WTC11 (cell line): ENCODE measurements at regions of chr19 and their contacts with region 1.

Region 1: DNA sequence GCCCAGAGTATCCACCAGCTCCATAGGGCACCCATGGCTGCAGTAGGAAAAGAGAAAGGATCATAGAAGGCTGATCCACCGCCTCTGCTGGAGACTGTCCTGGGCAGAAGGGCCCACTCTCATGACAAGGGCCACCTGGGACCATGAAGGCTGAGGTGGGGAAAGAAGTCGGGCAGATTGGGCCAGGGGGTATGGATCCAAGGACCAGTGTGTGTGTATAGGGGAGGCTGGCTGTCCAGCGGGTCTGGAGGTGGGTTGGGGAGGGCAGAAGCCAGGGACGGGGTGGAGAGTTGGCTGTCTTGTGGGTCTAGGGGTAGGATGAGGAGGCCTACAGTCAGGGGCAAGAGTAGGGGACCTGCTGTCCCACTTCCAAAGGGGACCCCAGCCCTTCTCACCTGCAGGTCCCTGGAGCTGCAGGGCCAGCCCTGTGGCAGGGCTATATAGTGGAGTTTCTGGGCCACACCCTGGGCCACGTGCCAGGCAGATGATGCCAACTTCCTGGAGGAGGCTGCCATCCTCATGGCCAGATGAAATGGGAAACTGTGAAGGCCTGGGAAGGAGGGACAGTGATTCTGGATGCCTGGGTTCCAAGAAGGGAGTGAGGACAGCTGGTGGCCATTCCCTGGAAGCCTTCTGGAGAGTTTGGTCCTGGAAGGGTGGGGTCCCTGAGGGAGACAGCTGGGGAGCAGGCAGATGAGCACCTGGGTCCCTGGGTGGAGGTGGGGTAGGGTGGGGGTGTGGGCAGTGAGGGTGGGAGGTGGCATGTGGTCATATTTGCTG is at the start of gene FCGBP:
- DNase-seq: no peak
- ATAC-seq: no peak
- H3K4me3 Mint-ChIP-seq: no peak within 1 kb of the TSS
- H3K27ac Mint-ChIP-seq: no peak within 1 kb of the TSS
- H3K4me1 Mint-ChIP-seq: no peaks in the 10 kb centered on the region
- H3K27me3 Mint-ChIP-seq: peaks cover 3% of the 10 kb centered on the region
- CTCF ChIP-seq: no peak
- total RNA-seq, gene FCGBP: 2.8 to 4.4 TPM (median 3.5 TPM) in 3 replicates

Region 2: DNA sequence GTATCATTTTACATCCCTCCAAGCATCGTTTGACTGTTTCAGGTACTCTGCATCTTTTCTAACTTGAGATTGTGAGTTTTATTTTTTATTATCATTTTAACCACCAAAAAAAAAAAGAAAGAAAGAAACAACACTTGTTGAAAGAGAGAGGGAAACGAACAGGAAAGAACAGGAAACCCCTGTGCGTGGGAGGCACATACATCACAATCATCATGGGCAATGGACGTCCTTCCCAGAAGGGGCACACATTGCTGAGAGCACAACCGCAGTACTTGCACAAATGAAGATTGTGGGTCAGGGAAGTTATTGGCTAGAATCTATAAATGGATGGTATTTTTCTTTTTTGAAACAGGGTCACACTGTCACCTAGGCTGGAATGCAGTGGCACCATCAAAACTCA is 198.7 kb before region 1 on chr19:
- CTCF ChIA-PET with region 1: no interaction called
- POLR2A ChIA-PET with region 1: interaction called, 11 read pairs
- DNase-seq: no peak
- ATAC-seq: no peak
- H3K4me3 Mint-ChIP-seq: no peak overlapping the region
- H3K27ac Mint-ChIP-seq: no peak overlapping the region
- H3K4me1 Mint-ChIP-seq: no peaks in the 10 kb centered on the region; the same call in 1 of the 2 replicates
- H3K27me3 Mint-ChIP-seq: peaks cover 33% of the 10 kb centered on the region
- CTCF ChIP-seq: no peak

Region 3: DNA sequence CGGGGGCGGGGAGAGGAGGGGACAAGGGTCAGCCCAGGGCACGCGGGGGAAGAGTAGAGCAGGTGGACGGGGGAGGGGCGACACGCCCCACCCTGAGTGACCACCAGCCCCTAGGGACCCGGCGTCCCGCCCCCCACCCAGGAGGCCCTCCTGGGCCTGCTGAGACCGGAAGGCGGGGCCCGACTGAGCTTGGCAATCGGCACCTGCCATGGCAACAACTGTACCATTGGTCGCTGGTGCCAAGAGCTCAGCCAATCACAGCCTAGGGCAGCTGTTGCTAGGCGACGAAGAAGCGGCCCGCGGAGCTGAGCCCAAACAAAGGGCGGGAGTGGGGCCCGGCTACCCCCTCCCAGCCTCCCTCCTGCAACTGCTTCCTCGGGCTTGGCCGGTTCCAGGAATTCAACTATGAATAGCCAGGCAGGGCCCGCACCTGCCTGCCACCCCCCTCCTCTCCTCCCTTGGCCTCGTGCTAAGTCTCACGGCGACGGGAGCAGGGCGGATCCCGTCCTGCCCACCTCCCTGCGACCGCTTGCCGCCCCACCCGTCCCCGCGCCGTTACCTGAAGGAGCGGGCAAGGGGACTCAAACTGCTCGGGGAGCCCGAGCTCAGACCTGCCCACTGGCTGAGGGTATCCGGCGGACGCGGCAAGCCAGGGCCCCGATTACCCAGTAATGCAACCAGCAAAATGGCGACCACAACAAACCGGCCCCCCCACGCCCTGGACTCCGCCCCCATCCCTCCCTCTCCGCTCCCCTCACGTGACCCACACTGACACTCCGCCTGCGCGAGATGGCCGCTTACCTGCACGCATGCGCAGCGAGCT is 101.1 kb before region 1 on chr19 and contains the start of gene DYRK1B:
- CTCF ChIA-PET with region 1: no interaction called
- POLR2A ChIA-PET with region 1: no interaction called
- DNase-seq: peak; percentile 96
- ATAC-seq: peak; percentile 91
- H3K4me3 Mint-ChIP-seq: peak within 1 kb of the TSS; percentile 72
- H3K27ac Mint-ChIP-seq: peak within 1 kb of the TSS; percentile 98
- H3K4me1 Mint-ChIP-seq: peaks cover 13% of the 10 kb centered on the region
- H3K27me3 Mint-ChIP-seq: no peaks in the 10 kb centered on the region
- CTCF ChIP-seq: no peak
- total RNA-seq, gene DYRK1B: 12.2 to 14.0 TPM (median 13.2 TPM) in 3 replicates

Region 4: GRCh38 chr19:40241809-40242384 is 307.1 kb after region 1 on chr19:
- CTCF ChIA-PET with region 1: no interaction called
- POLR2A ChIA-PET with region 1: no interaction called
- DNase-seq: no peak
- ATAC-seq: no peak
- H3K4me3 Mint-ChIP-seq: no peak overlapping the region
- H3K27ac Mint-ChIP-seq: no peak overlapping the region
- H3K4me1 Mint-ChIP-seq: peaks cover 3% of the 10 kb centered on the region; the same call in 1 of the 2 replicates
- H3K27me3 Mint-ChIP-seq: no peaks in the 10 kb centered on the region
- CTCF ChIP-seq: no peak